ENCODE measurements at regions of chr20 and their contacts with region 1.

Region 1: GRCh38 chr20:6074145-6074561 is 20.3 kb upstream of the LRRN4 start:
- DNase-seq: peak in 2 of 14 experiments; percentile 19 to 33
- ATAC-seq: peak; percentile 39
- H3K4me3 ChIP-seq: no peak overlapping the region
- H3K4me3 Mint-ChIP-seq: no peak overlapping the region
- H3K27ac ChIP-seq: no peak overlapping the region
- H3K27ac Mint-ChIP-seq: no peak overlapping the region
- H3K4me1 ChIP-seq: no peaks in the 10 kb centered on the region
- H3K4me1 Mint-ChIP-seq: no peaks in the 10 kb centered on the region
- H3K27me3 ChIP-seq: no peaks in the 10 kb centered on the region
- H3K27me3 Mint-ChIP-seq: no peaks in the 10 kb centered on the region
- CTCF ChIP-seq: no peak

Region 2: DNA sequence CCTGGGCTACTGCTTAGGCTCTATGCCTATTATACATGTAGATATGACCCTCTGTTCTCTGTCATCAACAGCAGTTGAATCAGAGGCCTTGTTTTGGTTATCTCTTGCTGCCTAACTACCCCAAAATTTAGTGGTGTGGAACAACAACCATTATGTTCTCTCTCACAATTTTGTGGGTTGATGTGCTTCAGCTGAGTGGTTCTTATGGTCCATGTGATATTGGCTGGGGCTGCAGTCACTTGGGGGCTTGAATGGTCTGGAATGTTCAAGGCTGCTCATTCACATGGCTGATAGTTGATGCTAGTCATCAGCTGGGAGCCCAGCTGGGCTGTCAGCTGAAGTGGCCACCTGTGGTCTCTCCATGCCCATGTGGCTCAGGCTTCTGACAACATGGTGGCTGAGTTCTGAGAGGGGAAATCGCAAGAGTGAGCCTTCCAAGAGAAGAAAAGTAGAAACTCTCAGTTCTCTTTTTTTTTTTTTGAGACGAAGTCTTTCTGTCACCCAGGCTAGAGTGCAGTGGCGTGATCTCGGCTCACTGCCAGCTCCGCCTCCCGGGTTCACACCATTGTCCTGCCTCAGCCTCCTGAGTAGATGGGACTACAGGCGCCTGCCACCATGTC is 276.2 kb before region 1 on chr20:
- CTCF ChIA-PET with region 1: no interaction called
- POLR2A ChIA-PET with region 1: no interaction called
- intact Hi-C with region 1: loop called in 1 of 2 experiments (anchors 2 kb)
- DNase-seq: no peak
- ATAC-seq: no peak
- H3K4me3 ChIP-seq: no peak overlapping the region
- H3K4me3 Mint-ChIP-seq: no peak overlapping the region
- H3K27ac ChIP-seq: no peak overlapping the region
- H3K27ac Mint-ChIP-seq: no peak overlapping the region
- H3K4me1 ChIP-seq: no peaks in the 10 kb centered on the region
- H3K4me1 Mint-ChIP-seq: peaks cover 11% of the 10 kb centered on the region
- H3K27me3 ChIP-seq: no peaks in the 10 kb centered on the region
- H3K27me3 Mint-ChIP-seq: no peaks in the 10 kb centered on the region
- CTCF ChIP-seq: no peak

Region 3: DNA sequence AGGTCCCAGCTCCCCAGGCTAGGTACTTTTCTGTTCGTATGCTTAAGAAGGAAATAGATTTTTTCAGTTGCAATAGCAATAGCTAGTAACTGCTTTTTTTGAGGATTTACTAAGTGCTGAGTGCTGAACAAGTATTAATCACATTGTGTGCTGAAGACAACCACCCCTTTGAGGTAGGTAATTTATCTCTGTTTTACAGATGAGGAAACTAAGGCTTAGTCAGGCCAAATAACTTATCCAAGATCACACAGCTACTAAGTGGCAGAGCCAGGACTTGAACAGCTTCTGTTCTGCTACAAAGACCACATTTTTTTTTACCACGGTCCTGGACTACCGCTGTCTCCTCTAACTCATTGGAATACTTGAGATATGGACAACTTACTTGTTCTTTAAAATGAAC is 60.1 kb before region 1 on chr20:
- CTCF ChIA-PET with region 1: no interaction called
- POLR2A ChIA-PET with region 1: interaction called, 3 read pairs
- intact Hi-C with region 1: loop called in 1 of 2 experiments (anchors 5 kb)
- DNase-seq: no peak
- ATAC-seq: no peak
- H3K4me3 ChIP-seq: no peak overlapping the region
- H3K4me3 Mint-ChIP-seq: no peak overlapping the region
- H3K27ac ChIP-seq: no peak overlapping the region
- H3K27ac Mint-ChIP-seq: peak overlapping the region; percentile 40
- H3K4me1 ChIP-seq: no peaks in the 10 kb centered on the region
- H3K4me1 Mint-ChIP-seq: peaks cover 57% of the 10 kb centered on the region
- H3K27me3 ChIP-seq: no peaks in the 10 kb centered on the region
- H3K27me3 Mint-ChIP-seq: no peaks in the 10 kb centered on the region
- CTCF ChIP-seq: no peak

Measured in CD4-positive, alpha-beta T cell (primary cell).